ENCODE measurements at regions of chr14 and their contacts with region 1.

Region 1: GRCh38 chr14:68405961-68406360 is 386.9 kb downstream of the ZFP36L1 start:
- DNase-seq: no peak
- ATAC-seq: no peak
- H3K4me3 ChIP-seq: no peak overlapping the region
- H3K27ac ChIP-seq: no peak overlapping the region
- H3K4me1 ChIP-seq: no peaks in the 10 kb centered on the region
- H3K27me3 ChIP-seq: no peaks in the 10 kb centered on the region
- CTCF ChIP-seq: no peak

Region 2: GRCh38 chr14:68164711-68165113 is 241.2 kb before region 1 on chr14:
- CTCF ChIA-PET with region 1: no interaction called
- POLR2A ChIA-PET with region 1: no interaction called
- in situ Hi-C with region 1: no loop called
- intact Hi-C with region 1: no loop called
- DNase-seq: no peak
- ATAC-seq: peak; percentile 63; the same call in 1 of the 2 replicates
- H3K4me3 ChIP-seq: no peak overlapping the region
- H3K27ac ChIP-seq: peak overlapping the region; percentile 76
- H3K4me1 ChIP-seq: peaks cover 6% of the 10 kb centered on the region; the same call in 1 of the 2 replicates
- H3K27me3 ChIP-seq: no peaks in the 10 kb centered on the region
- CTCF ChIP-seq: no peak

Region 3: GRCh38 chr14:68418174-68419118 is 12.5 kb after region 1 on chr14:
- CTCF ChIA-PET with region 1: no interaction called
- POLR2A ChIA-PET with region 1: no interaction called
- in situ Hi-C with region 1: no loop called
- intact Hi-C with region 1: no loop called
- DNase-seq: no peak
- ATAC-seq: no peak
- H3K4me3 ChIP-seq: no peak overlapping the region
- H3K27ac ChIP-seq: no peak overlapping the region; the same call in 1 of the 2 replicates
- H3K4me1 ChIP-seq: no peaks in the 10 kb centered on the region
- H3K27me3 ChIP-seq: no peaks in the 10 kb centered on the region
- CTCF ChIP-seq: no peak

Region 4: DNA sequence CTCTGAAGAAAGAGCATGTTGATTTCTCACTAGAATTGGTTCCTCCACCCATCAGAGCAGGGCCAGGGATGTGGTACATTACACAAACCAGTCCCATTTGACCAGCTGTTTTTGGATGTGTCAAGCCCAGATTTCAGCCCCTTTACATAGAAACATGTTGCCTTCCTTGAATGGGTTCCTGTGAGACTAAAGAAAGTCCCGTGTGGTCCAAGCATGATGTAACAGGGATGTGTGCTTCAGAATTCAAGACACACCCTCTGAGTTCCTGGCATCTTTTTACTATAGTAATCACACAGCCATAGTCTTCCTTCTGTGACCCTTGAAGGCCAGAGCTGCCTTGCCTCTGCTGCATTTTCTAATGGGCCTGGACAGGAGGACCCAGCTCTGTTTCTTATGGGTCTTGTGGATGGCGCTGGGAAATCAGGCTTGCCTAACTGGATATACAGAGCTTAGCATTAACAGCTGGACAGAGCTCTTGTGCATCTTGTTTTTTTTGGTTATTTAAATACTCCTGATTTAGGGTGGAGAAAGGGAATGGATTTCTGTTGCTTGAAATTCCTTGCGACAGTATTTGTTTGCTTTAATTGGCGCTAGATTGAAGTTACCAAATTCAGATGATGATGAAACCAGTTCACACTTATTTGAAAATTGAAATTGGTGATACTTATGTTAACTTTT is 45.9 kb after region 1 on chr14:
- CTCF ChIA-PET with region 1: interaction called, 11 read pairs
- POLR2A ChIA-PET with region 1: no interaction called
- in situ Hi-C with region 1: no loop called
- intact Hi-C with region 1: no loop called
- DNase-seq: no peak
- ATAC-seq: no peak
- H3K4me3 ChIP-seq: no peak overlapping the region
- H3K27ac ChIP-seq: peak overlapping the region; percentile 29; the same call in 1 of the 2 replicates
- H3K4me1 ChIP-seq: no peaks in the 10 kb centered on the region
- H3K27me3 ChIP-seq: no peaks in the 10 kb centered on the region
- CTCF ChIP-seq: no peak

Region 5: GRCh38 chr14:68638141-68638999 is 232.4 kb after region 1 on chr14:
- CTCF ChIA-PET with region 1: no interaction called
- POLR2A ChIA-PET with region 1: no interaction called
- in situ Hi-C with region 1: no loop called
- intact Hi-C with region 1: no loop called
- DNase-seq: no peak
- ATAC-seq: no peak
- H3K4me3 ChIP-seq: no peak overlapping the region
- H3K27ac ChIP-seq: no peak overlapping the region; the same call in 1 of the 2 replicates
- H3K4me1 ChIP-seq: no peaks in the 10 kb centered on the region
- H3K27me3 ChIP-seq: no peaks in the 10 kb centered on the region
- CTCF ChIP-seq: no peak

Measured in Panc1 (cell line).